Activated naive CD4-positive, alpha-beta T cell treated with anti-CD3 and anti-CD28 coated beads, Interleukin-2, amount 10 ng/mL, durations not matched to agents 7 days and 5 days (primary cell): ENCODE measurements at regions of chr5 and their contacts with region 1.

Region 1: DNA sequence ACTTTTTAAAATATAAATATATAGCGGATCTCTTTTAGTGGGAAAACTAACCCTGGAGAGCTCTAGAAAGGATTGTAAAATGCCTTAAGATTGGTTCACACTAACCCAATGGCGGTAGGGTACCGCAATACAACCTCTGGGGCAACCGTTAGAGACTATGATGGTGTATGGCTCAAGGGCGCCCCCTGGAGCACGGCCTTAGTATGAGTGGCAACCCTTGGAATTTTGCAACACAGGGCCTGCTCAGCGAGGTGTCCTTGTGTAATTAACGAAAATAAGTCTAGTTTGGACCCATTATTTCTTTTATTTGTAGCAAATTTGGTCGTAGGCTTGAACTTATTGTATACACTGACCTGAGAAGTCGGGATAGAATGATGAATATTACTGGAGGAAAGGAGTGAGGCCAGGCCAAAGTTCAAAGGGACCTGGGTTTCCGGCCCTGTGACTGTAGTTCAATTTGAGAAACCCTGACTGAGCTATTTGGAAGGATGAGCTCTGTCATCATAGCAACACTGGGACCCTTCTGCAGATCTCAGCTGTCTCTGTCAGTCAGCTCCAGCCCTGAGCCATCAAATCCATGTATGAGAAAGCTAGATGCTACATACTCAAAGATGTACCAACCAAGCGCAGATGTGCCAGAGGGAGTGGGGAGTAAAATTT is 54.8 kb downstream of the CAMK4 start:
- DNase-seq: peak; percentile 90
- H3K4me3 Mint-ChIP-seq: no peak overlapping the region
- H3K27ac Mint-ChIP-seq: peak overlapping the region; percentile 79
- H3K4me1 Mint-ChIP-seq: peaks cover 39% of the 10 kb centered on the region
- H3K27me3 Mint-ChIP-seq: no peaks in the 10 kb centered on the region

Region 2: DNA sequence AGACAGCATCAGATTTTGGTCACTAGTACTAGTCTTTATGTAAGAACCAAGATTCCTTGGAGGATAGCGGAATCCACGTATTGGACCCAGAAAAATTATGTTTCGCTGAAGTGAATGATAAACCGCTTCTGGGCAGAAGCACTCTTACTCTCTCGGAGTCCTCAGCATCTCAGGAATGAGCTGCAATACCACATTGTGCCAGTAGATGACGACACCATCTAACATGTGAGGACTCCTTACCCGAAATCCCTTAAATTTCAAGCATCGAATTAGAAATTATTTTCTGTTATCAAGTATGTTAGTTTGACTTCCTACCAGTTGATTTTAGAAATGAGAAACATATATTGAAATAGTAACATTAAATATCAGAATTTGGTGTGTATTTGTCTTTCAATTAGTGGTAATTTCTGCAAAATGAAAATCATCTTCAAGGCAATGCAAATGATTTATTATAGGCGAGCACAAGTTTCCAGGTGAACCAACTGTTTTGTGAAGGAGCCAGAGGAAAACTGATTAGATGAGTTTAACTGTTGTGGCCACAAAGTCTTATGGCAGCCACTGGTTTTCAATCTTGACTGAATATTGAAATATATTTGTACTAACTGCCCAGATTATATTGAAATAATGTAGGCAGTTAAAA is 120.8 kb before region 1 on chr5:
- CTCF ChIA-PET with region 1: interaction called, 124 read pairs
- DNase-seq: peak; percentile 86
- H3K4me3 Mint-ChIP-seq: no peak overlapping the region
- H3K27ac Mint-ChIP-seq: no peak overlapping the region
- H3K4me1 Mint-ChIP-seq: peaks cover 2% of the 10 kb centered on the region
- H3K27me3 Mint-ChIP-seq: no peaks in the 10 kb centered on the region

Region 3: GRCh38 chr5:111169269-111169668 is 109.7 kb before region 1 on chr5:
- CTCF ChIA-PET with region 1: interaction called, 12 read pairs
- DNase-seq: no peak
- H3K4me3 Mint-ChIP-seq: no peak overlapping the region
- H3K27ac Mint-ChIP-seq: no peak overlapping the region
- H3K4me1 Mint-ChIP-seq: no peaks in the 10 kb centered on the region
- H3K27me3 Mint-ChIP-seq: no peaks in the 10 kb centered on the region

Region 4: DNA sequence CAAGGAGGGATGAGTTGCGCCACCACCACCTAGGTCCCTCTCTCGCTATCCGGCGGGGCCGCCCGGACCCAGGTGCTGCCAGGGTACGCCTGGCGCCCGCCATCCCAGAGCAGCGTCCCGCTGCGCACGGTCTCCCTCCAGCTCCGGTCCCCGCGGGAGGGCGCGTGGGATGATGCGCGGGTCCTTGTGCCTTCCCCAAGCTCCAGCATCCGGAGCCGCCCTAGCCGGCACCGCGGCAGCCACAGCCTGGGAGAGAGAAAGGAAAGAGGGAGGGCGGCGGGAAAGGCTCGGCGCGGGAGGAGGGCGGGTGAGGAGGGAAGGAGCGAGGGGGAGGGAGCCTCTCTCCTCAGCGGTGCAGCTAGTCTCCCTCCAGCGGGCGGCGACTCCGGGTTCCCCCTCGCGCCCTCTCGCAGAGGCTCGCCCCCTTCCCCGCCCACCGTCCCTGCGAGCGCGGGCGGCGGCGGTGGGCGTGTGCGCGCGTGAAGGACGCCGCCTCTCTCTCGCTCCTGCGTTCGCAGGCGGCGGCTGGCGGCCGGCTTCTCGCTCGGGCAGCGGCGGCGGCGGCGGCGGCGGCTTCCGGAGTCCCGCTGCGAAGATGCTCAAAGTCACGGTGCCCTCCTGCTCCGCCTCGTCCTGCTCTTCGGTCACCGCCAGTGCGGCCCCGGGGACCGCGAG is 54.9 kb before region 1 on chr5 and contains the start of gene CAMK4:
- CTCF ChIA-PET with region 1: interaction called, 60 read pairs
- DNase-seq: peak; percentile 90
- H3K4me3 Mint-ChIP-seq: peak within 1 kb of the TSS; percentile 98
- H3K27ac Mint-ChIP-seq: peak within 1 kb of the TSS; percentile 92
- H3K4me1 Mint-ChIP-seq: peaks cover 29% of the 10 kb centered on the region
- H3K27me3 Mint-ChIP-seq: no peaks in the 10 kb centered on the region

Region 5: DNA sequence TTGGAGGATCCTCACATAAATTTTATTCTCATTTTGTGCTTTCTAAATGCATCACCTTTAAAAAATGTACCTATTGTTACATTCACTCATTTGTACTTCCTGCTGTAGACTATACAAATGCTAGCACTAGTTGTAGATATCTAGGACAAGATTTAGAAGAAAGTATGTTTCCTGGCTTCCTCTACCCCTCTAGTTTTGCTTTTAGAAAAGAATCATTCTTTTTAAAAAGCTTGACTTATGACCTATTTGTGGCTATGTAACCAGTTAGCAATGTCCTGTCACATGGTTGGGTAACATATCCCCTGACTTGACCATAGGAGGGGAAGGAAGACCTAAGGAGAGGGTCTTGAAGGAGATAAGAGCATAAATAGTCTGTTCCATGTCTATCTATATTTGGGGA is 41.5 kb before region 1 on chr5:
- CTCF ChIA-PET with region 1: interaction called, 15 read pairs
- DNase-seq: no peak
- H3K4me3 Mint-ChIP-seq: peak overlapping the region; percentile 42
- H3K27ac Mint-ChIP-seq: peak overlapping the region; percentile 91
- H3K4me1 Mint-ChIP-seq: peaks cover 87% of the 10 kb centered on the region
- H3K27me3 Mint-ChIP-seq: no peaks in the 10 kb centered on the region

Region 6: GRCh38 chr5:111266491-111266890 is 12.5 kb before region 1 on chr5:
- CTCF ChIA-PET with region 1: interaction called, 11 read pairs
- DNase-seq: no peak
- H3K4me3 Mint-ChIP-seq: no peak overlapping the region
- H3K27ac Mint-ChIP-seq: no peak overlapping the region
- H3K4me1 Mint-ChIP-seq: peaks cover 45% of the 10 kb centered on the region
- H3K27me3 Mint-ChIP-seq: no peaks in the 10 kb centered on the region

Region 7: GRCh38 chr5:111596705-111597104 is 317.7 kb after region 1 on chr5:
- CTCF ChIA-PET with region 1: no interaction called
- DNase-seq: no peak
- H3K4me3 Mint-ChIP-seq: no peak overlapping the region
- H3K27ac Mint-ChIP-seq: no peak overlapping the region
- H3K4me1 Mint-ChIP-seq: no peaks in the 10 kb centered on the region
- H3K27me3 Mint-ChIP-seq: no peaks in the 10 kb centered on the region